Heart right ventricle (tissue), 16 donors: ENCODE measurements at regions of chr11 and their contacts with region 1.

Region 1: DNA sequence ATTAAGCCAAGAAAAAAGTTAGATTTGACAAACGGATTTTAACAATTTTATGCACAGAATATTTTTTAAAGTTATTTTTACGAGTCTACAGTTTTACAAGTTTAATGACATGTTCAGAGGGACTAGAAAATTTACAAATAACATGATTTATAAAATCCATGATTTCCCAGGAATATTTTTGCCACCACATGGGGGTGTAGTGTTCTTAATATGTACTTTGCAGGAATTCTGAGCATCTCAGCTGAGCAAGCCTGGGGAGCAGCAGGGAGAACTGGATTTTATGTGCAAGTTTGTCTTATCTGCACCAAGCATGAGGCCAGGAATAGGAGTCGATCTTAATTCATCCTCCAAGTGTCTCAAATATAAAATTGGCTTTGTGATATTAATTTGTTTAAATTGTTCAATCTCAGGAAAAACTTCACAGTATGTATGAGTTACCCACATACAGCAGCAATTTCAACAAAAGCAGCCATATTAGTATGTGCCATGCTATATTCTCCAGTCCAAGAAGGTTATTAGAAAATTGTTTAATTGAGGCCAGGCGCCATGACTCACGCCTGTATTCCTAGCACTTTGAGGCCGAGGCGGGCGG is 826.3 kb downstream of the DLG2 start:
- DNase-seq: no peak
- ATAC-seq: no peak
- H3K4me3 ChIP-seq: no peak overlapping the region
- H3K27ac ChIP-seq: no peak overlapping the region
- H3K4me1 ChIP-seq: no peaks in the 10 kb centered on the region
- H3K27me3 ChIP-seq: no peaks in the 10 kb centered on the region
- CTCF ChIP-seq: peak in 8 of 9 donors; percentile 12 to 46 (median 34)

Region 2: GRCh38 chr11:84847842-84848241 is 47.0 kb after region 1 on chr11:
- intact Hi-C with region 1: no loop called
- DNase-seq: no peak
- ATAC-seq: no peak
- H3K4me3 ChIP-seq: no peak overlapping the region
- H3K27ac ChIP-seq: no peak overlapping the region
- H3K4me1 ChIP-seq: no peaks in the 10 kb centered on the region
- H3K27me3 ChIP-seq: no peaks in the 10 kb centered on the region
- CTCF ChIP-seq: no peak

Region 3: GRCh38 chr11:84865249-84865648 is 64.4 kb after region 1 on chr11:
- intact Hi-C with region 1: no loop called
- DNase-seq: no peak
- ATAC-seq: peak in 1 of 8 donors; percentile 44
- H3K4me3 ChIP-seq: no peak overlapping the region
- H3K27ac ChIP-seq: no peak overlapping the region
- H3K4me1 ChIP-seq: peaks cover 0 to 15% (median 10%) of the 10 kb centered on the region in 9 donors
- H3K27me3 ChIP-seq: no peaks in the 10 kb centered on the region
- CTCF ChIP-seq: no peak

Region 4: DNA sequence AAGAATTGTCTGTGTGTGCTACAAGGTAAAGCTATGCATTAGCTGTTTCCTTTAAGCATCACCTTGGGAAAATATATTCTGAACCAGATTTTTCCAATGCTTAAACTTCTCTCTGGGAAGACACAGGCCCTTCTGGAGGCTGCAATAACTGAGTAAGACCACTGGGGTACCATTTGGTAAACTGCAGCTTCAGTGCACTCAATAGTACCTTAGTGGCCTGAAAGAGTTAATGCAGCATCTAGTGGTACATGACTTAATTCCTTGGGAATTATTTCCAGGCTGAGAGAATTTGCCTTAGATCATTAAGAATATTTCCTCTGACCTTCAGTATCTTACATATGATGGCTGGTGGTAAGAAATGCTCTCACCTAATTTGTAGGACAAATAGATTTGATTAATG is 98.9 kb after region 1 on chr11:
- intact Hi-C with region 1: loop called in 1 of 10 experiments (anchors 10 kb)
- DNase-seq: no peak
- ATAC-seq: no peak
- H3K4me3 ChIP-seq: no peak overlapping the region
- H3K27ac ChIP-seq: no peak overlapping the region
- H3K4me1 ChIP-seq: peaks cover 0 to 15% (median 3%) of the 10 kb centered on the region in 9 donors
- H3K27me3 ChIP-seq: no peaks in the 10 kb centered on the region
- CTCF ChIP-seq: peak in 2 of 9 donors; percentile 11 to 24

Region 5: DNA sequence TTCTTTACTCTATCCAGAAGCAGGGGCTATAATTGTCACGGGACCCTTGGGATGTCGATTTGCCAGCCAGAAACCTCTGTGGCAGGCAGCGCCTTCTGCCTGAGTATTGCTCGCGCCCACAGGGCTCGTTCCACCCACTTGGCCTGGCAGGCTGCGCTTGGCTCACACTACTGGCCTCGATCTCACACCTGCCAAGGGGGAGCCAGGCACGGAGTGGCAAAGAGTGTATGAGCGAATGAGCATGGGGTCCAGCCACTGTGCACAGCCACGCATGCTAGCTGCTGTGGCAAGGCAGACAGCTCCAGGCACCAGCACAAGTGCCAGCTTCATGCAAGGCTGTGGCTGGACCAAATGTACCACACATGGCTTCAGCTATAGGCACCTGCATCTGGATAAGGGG is 226.5 kb after region 1 on chr11:
- intact Hi-C with region 1: loop called in 1 of 10 experiments (anchors 2 kb)
- DNase-seq: peak in 1 of 2 donors; percentile 2
- ATAC-seq: no peak
- H3K4me3 ChIP-seq: no peak overlapping the region
- H3K27ac ChIP-seq: no peak overlapping the region
- H3K4me1 ChIP-seq: no peaks in the 10 kb centered on the region
- H3K27me3 ChIP-seq: no peaks in the 10 kb centered on the region
- CTCF ChIP-seq: no peak